ENCODE measurements at regions of chr7 and their contacts with region 1.

Region 1: DNA sequence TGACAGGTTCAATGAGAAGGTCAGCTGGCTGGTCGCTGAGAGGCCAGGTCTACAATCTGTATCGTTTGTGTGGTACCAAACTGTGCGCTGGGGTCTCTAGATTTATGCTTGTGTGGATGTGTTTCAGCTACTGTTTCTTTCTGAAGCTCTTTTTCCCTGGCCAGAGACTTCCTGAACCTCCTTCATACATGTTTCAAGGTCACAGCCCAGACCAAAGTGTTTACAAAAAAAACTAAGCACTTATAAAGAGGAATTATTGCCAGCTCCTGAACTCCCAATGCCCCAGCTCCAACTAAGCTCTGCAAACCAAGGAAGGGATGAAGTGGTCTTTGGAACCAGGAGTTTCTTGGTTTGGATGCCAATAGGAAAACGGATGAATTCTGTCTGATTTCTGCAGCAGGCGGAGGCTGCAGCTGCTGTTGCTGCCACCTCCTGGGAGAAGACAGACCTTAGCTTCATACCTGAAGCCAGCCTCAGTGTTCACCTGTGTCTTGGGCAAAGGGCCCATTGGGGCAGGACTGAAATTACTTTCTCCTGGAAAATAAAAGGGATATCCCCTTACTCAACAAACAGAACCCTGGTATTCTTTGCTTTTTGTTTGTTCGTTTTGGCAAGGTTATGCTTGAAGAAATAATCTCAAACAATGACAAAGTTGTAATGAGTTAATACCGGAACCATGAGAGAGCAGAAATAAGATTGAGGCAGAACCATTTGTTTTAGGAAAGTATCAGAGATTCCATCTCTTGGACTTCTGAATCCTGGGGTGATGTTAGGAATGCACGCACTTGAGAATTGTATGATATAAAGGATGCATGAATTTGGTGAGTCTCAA is 24.6 kb upstream of the MKLN1 start:
- DNase-seq: peak in 1 of 3 donors; percentile 65
- ATAC-seq: peak; percentile 52 to 57
- H3K4me3 ChIP-seq: no peak overlapping the region
- H3K27ac ChIP-seq: peak overlapping the region; percentile 72
- H3K4me1 ChIP-seq: peaks cover 9% of the 10 kb centered on the region
- H3K27me3 ChIP-seq: no peaks in the 10 kb centered on the region

Region 2: GRCh38 chr7:131071786-131072504 is 231.1 kb before region 1 on chr7:
- intact Hi-C with region 1: loop called in 1 of 4 experiments (anchors 10 kb)
- DNase-seq: peak; percentile 68 to 80 (median 73)
- ATAC-seq: peak; percentile 66 to 89
- H3K4me3 ChIP-seq: peak overlapping the region; percentile 38
- H3K27ac ChIP-seq: peak overlapping the region; percentile 67
- H3K4me1 ChIP-seq: peaks cover 16% of the 10 kb centered on the region
- H3K27me3 ChIP-seq: no peaks in the 10 kb centered on the region

Region 3: DNA sequence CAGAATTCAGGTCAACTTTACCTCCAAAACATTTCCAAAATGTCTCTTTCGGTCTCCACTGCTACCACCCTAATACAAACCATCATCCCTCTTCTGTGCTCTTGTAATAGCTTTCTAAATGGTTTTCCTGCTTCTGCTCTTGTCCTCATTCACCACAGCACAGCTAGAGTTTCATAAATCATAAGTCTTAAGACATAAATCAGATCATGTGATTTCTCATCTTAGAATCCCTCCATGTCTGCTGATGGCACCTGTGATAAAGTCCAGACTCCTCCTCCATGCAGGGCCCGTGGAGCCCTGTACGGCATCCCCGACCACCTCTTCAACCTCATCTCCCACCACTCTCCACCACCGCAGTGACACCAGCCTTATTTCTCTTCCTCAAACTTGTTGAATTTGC is 187.8 kb before region 1 on chr7:
- intact Hi-C with region 1: loop called in 1 of 4 experiments (anchors 5 kb)
- DNase-seq: no peak
- ATAC-seq: no peak
- H3K4me3 ChIP-seq: no peak overlapping the region
- H3K27ac ChIP-seq: no peak overlapping the region
- H3K4me1 ChIP-seq: no peaks in the 10 kb centered on the region
- H3K27me3 ChIP-seq: no peaks in the 10 kb centered on the region

Region 4: DNA sequence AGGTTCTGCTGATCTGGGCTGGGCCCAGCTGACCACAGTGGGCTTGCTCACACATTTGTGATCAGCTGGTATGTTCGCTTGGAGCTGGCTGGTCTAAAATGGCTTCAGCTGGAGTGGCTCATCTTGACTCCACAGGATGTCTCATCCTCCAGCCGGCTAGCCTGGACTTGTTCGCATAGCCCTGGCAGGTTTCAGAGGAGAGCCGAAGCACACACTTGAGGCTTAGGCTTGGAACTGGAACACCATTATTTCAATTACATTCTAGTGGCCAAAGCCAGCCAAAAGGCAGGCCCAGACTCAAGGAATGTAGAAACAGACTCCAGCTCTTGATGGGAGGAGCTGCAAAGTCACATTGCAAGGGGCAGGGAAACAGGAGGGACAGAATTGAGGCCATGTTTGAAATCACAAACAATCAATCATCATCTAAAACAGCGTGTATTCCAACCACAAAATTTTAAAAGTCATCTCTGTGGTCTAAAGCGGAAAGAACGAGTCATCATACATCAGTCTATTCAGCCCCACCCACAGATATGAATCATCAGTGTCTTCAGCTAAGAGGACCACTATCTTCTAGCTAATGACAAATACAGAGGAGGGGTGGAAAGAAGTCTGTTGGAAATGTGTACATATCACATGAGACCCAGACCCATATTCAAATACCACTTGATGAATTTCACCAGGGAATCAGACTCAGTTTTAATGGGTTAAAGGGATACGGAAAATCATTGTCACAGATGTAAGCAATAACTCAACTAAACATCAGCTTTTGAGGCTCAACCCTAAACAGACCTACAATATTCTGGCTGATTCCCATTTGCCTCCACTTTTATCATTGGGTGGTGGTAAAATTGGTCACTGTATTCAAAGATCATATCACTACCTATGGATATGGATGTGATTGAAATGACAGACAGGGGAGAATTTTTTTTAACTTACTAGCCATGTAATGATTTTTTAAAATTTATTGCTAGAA is 114.4 kb before region 1 on chr7:
- intact Hi-C with region 1: loop called in 1 of 4 experiments (anchors 10 kb)
- DNase-seq: no peak
- ATAC-seq: peak in 1 of 2 donors; percentile 31
- H3K4me3 ChIP-seq: no peak overlapping the region
- H3K27ac ChIP-seq: peak overlapping the region; percentile 70
- H3K4me1 ChIP-seq: peaks cover 8% of the 10 kb centered on the region
- H3K27me3 ChIP-seq: no peaks in the 10 kb centered on the region

Measured in right cardiac atrium (tissue), 5 donors.